K562 (cell line): ENCODE measurements at regions of chr17 and their contacts with region 1.

Region 1: DNA sequence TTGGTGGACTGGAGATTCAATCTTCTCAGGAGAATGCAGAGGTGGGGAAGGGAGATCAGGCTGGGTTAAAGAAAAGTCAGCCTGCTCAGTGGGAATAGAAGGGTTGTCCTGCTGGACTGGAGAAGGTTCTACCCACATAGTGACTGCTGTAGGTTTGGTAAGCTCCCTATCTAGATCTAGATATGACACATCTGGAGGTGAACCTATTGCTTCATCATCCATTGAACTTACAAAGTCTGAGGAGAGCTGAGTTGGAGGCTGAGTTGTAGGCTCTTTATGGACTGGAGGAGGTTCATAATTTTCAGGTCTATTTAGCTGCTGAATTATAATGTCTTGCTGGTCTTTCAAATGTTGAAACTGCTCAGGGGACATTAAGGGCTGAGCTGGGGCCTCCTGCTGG is 46.0 kb upstream of the NF1 start:
- DNase-seq: no peak
- ATAC-seq: no peak; the same call in 2 of the 3 replicates
- H3K4me3 ChIP-seq: no peak overlapping the region
- H3K27ac ChIP-seq: no peak overlapping the region
- H3K4me1 ChIP-seq: peaks cover 5 to 21% of the 10 kb centered on the region in 2 experiments; a peak in 4 of 5 replicates
- H3K27me3 ChIP-seq: no peaks in the 10 kb centered on the region
- CTCF ChIP-seq: no peak
- EP300 ChIP-seq: no peak
- POLR2A ChIP-seq: no peak
- RAD21 ChIP-seq: no peak

Region 2: GRCh38 chr17:30961209-30962188 is 87.3 kb before region 1 on chr17:
- CTCF ChIA-PET with region 1: no interaction called
- POLR2A ChIA-PET with region 1: no interaction called
- in situ Hi-C with region 1: no loop called
- intact Hi-C with region 1: no loop called
- DNase-seq: no peak
- ATAC-seq: peak; percentile 58; the same call in 1 of the 3 replicates
- H3K4me3 ChIP-seq: no peak overlapping the region
- H3K27ac ChIP-seq: no peak overlapping the region
- H3K4me1 ChIP-seq: no peaks in the 10 kb centered on the region
- H3K27me3 ChIP-seq: peaks cover 0 to under 1% of the 10 kb centered on the region in 2 experiments; a peak in 1 of 5 replicates
- CTCF ChIP-seq: no peak
- EP300 ChIP-seq: no peak
- POLR2A ChIP-seq: no peak
- RAD21 ChIP-seq: no peak

Region 3: GRCh38 chr17:31068291-31068690 is 19.5 kb after region 1 on chr17:
- CTCF ChIA-PET with region 1: no interaction called
- POLR2A ChIA-PET with region 1: no interaction called
- in situ Hi-C with region 1: no loop called
- intact Hi-C with region 1: no loop called
- DNase-seq: peak; percentile 46 to 74 (median 54)
- ATAC-seq: peak; percentile 91
- H3K4me3 ChIP-seq: no peak overlapping the region
- H3K27ac ChIP-seq: no peak overlapping the region
- H3K4me1 ChIP-seq: no peaks in the 10 kb centered on the region
- H3K27me3 ChIP-seq: no peaks in the 10 kb centered on the region; a peak in 1 of 5 replicates
- CTCF ChIP-seq: peak; percentile 67 to 97 (median 86)
- EP300 ChIP-seq: no peak
- POLR2A ChIP-seq: no peak
- RAD21 ChIP-seq: peak; percentile 32 to 78; a peak in 3 of 4 replicates

Region 4: GRCh38 chr17:32020943-32021614 is 972.3 kb after region 1 on chr17:
- CTCF ChIA-PET with region 1: no interaction called
- POLR2A ChIA-PET with region 1: no interaction called
- in situ Hi-C with region 1: loop called (anchors 10 kb)
- intact Hi-C with region 1: no loop called
- DNase-seq: no peak
- ATAC-seq: no peak
- H3K4me3 ChIP-seq: no peak overlapping the region
- H3K27ac ChIP-seq: no peak overlapping the region
- H3K4me1 ChIP-seq: no peaks in the 10 kb centered on the region; a peak in 1 of 5 replicates
- H3K27me3 ChIP-seq: no peaks in the 10 kb centered on the region
- CTCF ChIP-seq: no peak
- EP300 ChIP-seq: no peak
- POLR2A ChIP-seq: no peak
- RAD21 ChIP-seq: no peak

Region 5: GRCh38 chr17:32099686-32100085 is 1050.9 kb after region 1 on chr17:
- CTCF ChIA-PET with region 1: no interaction called
- POLR2A ChIA-PET with region 1: no interaction called
- in situ Hi-C with region 1: loop called (anchors 10 kb)
- intact Hi-C with region 1: no loop called
- DNase-seq: no peak
- ATAC-seq: no peak
- H3K4me3 ChIP-seq: no peak overlapping the region
- H3K27ac ChIP-seq: no peak overlapping the region
- H3K4me1 ChIP-seq: no peaks in the 10 kb centered on the region; a peak in 1 of 5 replicates
- H3K27me3 ChIP-seq: peaks cover 0 to 3% of the 10 kb centered on the region in 2 experiments; a peak in 2 of 5 replicates
- CTCF ChIP-seq: no peak
- EP300 ChIP-seq: no peak
- POLR2A ChIP-seq: no peak
- RAD21 ChIP-seq: no peak